Posterior vena cava (tissue), 2 donors: ENCODE measurements at regions of chr10 and their contacts with region 1.

Region 1: DNA sequence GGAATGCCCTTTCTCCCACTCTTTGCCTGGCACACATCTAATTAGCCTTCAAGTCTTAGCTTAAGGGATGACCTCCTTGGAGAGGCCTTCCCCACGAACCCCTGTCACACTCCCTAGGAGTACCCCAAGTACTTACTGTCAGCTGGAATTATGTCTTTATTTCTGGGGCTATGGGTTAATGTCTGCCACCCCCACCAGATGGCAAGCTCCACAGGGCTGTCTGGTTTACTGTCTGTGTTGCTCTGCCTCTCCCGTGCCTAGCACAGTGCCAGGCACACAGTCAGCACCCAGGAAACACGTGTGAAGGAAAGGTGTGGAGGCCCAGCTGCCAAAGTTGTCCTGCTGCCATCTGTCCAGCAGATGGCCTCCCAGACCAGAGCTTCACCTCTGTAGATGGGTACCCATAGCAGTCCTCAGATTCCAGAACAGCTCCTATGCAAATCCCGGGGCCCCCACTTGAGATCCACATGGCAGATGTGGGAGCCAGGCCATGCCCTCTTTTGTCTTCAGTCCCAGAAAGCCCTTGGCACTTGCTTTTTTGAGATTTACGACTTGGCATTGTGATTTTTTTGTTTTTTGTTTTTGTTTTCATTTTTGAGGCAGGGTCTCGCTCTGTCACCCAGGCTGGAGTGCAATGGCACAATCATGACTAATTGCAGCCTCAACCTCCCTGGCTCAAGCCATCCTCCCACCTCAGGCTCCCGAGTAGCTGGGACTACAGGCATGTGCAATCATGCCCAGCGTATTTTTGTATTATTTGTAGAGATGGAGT is 17.2 kb upstream of the PALD1 start:
- DNase-seq: no peak

Region 2: GRCh38 chr10:70540089-70540788 is 78.8 kb after region 1 on chr10:
- intact Hi-C with region 1: loop called (anchors 2 to 5 kb)
- DNase-seq: no peak

Region 3: DNA sequence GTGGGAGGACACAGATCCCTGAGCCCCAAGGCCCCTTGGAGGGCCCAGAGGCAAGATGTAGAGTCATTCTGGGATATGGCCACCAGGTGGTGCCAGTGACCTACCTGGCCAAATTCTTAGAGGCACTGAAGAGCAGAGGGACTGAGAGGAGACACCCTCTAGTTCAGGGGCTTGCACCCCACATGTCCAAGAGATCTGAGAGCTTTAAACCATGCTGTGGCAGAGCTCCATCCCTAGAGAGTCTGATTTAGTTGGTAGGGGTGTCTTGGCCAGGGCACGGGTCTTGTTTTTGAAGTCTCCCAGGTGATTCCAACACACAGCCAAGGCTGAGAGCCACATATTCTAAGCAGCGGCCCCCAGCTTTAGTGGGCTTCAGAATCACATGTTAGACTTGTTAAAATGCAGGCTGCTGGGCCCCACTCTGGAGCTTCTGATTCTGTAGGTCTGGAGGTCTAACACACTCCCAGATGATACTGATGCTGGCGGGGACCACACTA is 88.6 kb after region 1 on chr10:
- intact Hi-C with region 1: loop called in 1 of 2 experiments (anchors 5 kb)
- DNase-seq: no peak

Region 4: GRCh38 chr10:70758757-70759514 is 297.5 kb after region 1 on chr10:
- intact Hi-C with region 1: loop called in 1 of 2 experiments (anchors 5 kb)
- DNase-seq: peak; percentile 77